Dorsolateral prefrontal cortex (tissue), 120 donors: ENCODE measurements at regions of chr15 and their contacts with region 1.

Region 1: GRCh38 chr15:93030430-93031105 is 58.4 kb downstream of the RGMA start:
- DNase-seq: peak in 9 of 10 donors; percentile 63 to 83 (median 74)
- H3K4me3 ChIP-seq: peak overlapping the region in 3 of 59 donors; percentile 1 to 14 (median 5)
- H3K27ac ChIP-seq: peak overlapping the region in 52 of 59 donors; percentile 18 to 91 (median 68)
- H3K27me3 ChIP-seq: no peaks in the 10 kb centered on the region
- CTCF ChIP-seq: peak; percentile 47 to 95 (median 89)

Region 2: GRCh38 chr15:92797168-92797951 is 233.2 kb before region 1 on chr15:
- intact Hi-C with region 1: loop called (anchors 5 kb)
- DNase-seq: peak in 1 of 10 donors; percentile 13
- H3K4me3 ChIP-seq: no peak overlapping the region
- H3K27ac ChIP-seq: peak overlapping the region in 41 of 59 donors; percentile 0 to 80 (median 40)
- H3K27me3 ChIP-seq: no peaks in the 10 kb centered on the region
- CTCF ChIP-seq: peak; percentile 71 to 97 (median 88)

Region 3: DNA sequence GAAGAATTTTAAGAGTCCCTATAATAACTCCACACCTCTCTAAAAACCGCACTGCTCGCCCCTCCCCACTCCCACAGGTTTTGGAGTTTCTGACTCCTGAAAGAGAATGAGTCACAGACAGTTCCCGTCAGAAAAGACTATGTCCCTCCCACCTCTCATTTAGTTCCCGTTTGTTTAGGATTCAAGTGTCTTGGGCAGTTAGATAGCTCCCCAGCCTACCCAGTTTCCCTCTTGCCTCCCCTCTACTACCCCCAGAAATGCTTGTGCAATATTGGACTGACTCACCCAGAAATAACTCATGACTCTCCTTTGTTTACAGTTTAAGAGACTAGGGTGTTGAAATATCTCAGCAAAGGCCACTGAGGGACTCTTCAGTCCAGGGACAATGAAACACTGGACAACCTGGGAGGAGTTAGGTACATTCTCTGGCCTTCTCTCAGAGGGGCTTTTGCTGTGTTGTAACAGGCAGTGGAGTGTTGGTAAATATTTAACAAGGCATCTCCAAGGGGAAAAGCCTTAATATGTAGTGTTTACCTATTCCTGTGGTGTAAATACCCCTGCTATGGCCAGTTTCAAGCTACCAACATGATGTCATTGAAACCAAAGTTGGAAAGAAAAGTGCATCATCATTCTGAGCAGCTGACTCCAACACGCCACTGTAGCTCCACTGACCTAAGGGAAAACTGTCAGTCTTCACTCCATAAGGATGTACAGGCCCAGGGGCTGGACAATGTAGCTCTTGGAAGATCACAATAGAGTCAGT is 226.5 kb before region 1 on chr15:
- intact Hi-C with region 1: loop called (anchors 5 kb)
- DNase-seq: peak in 4 of 10 donors; percentile 40 to 67 (median 56)
- H3K4me3 ChIP-seq: no peak overlapping the region
- H3K27ac ChIP-seq: peak overlapping the region in 55 of 59 donors; percentile 0 to 89 (median 75)
- H3K27me3 ChIP-seq: no peaks in the 10 kb centered on the region
- CTCF ChIP-seq: no peak

Region 4: GRCh38 chr15:92868992-92869988 is 161.3 kb before region 1 on chr15:
- intact Hi-C with region 1: no loop called
- DNase-seq: no peak
- H3K4me3 ChIP-seq: no peak overlapping the region
- H3K27ac ChIP-seq: no peak overlapping the region
- H3K27me3 ChIP-seq: no peaks in the 10 kb centered on the region
- CTCF ChIP-seq: no peak

Region 5: GRCh38 chr15:93974804-93975481 is 944.4 kb after region 1 on chr15:
- intact Hi-C with region 1: loop called in 1 of 2 experiments (anchors 10 kb)
- DNase-seq: peak in 2 of 10 donors; percentile 5 to 34
- H3K4me3 ChIP-seq: no peak overlapping the region
- H3K27ac ChIP-seq: no peak overlapping the region
- H3K27me3 ChIP-seq: peaks cover 0 to 4% (median 0%) of the 10 kb centered on the region in 45 donors
- CTCF ChIP-seq: peak in 54 of 56 donors; percentile 14 to 64 (median 45)

Region 6: DNA sequence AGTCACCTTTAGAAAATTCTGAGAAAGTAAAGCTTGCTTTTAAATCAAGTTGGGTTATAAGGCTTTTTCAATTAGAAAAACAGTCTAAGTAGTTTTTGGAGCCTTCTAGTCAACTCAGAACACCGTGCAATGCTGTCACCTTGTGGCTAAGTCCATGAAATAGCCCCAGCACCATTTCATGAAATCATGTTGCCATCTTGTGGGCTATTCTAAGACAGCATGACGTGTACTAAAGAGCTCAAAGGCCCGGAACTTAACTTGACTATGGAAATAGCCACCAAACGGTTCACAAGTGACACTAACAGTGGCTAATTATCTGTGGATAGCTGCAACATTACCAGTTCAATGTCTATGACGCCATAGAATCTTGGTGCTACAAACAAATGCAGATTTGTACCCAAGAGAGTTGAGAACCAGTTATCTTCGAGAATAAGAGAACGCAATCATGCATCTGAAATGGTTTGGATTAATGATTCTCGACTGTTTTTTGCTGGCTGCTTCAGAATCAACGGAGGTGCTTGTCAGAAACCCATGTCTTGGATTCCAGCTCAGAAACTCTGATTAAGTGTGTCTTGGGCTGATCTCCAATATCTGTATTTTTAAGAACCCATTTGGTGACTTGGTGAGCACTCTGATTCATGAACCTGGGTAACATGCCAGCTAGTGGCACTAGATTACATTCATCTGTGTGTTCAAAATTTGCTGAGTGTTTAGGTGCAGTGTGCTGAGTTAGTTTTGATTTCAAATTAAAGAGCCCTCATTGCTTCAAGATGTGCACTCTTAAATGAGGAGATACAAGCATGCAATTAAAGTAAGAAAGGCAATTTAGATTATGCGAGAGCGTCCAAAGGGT is 1089.6 kb after region 1 on chr15:
- intact Hi-C with region 1: loop called (anchors 2 kb)
- DNase-seq: peak in 8 of 10 donors; percentile 20 to 74 (median 49)
- H3K4me3 ChIP-seq: no peak overlapping the region
- H3K27ac ChIP-seq: no peak overlapping the region
- H3K27me3 ChIP-seq: no peaks in the 10 kb centered on the region
- CTCF ChIP-seq: peak; percentile 66 to 99 (median 96)